ENCODE measurements at regions of chr15 and their contacts with region 1.

Region 1: DNA sequence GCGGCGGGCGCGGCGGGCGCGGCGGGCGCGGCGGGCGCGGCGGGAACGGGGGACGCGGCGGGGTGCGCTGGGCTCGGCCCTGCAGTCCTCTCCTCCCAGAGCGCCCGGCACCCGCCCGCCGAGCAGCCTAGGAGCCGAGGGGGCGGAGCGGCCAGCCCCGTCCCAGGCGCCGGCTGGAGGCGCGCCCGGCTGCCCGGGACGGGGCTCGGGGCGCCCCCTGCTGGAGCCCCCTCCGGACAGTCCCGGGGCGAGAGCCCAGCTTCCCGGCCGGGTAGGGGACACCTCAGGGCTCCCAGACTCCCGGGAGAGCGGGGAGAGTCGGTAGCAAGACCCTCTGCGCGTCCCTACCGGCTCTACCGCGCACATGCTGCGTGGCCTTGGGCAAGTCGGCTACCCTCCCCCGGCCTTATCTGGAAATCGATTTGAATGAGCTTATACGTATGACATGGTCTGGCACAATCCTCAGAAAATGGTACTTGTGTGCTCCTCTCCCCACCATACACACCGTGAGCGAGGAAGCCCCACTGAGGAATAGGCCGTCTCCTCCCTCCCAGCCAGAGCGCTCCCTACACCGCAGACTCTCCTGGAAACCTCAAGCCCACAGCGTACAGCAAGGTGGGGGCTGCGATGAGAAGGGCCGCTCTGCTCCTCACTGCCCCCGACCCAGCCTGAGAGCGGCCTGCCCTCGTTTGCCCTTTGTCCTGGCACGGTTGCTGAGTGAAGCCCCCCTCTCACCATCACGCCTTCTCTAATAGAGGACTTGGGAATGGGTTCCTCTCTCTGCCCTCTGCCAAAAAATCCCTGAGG is at the start of gene DAPK2:
- DNase-seq: peak; percentile 34
- ATAC-seq: peak; percentile 99
- H3K4me3 ChIP-seq: peak within 1 kb of the TSS; percentile 44
- H3K27ac ChIP-seq: no peak within 1 kb of the TSS
- H3K4me1 ChIP-seq: peaks cover 1% of the 10 kb centered on the region; the same call in 1 of the 2 replicates
- H3K27me3 ChIP-seq: peaks cover 40% of the 10 kb centered on the region
- CTCF ChIP-seq: peak; percentile 78
- POLR2A ChIP-seq: no peak
- RAD21 ChIP-seq: peak; percentile 68
- total RNA-seq, gene DAPK2: 0.28 and 0.36 TPM in 2 replicates

Region 2: DNA sequence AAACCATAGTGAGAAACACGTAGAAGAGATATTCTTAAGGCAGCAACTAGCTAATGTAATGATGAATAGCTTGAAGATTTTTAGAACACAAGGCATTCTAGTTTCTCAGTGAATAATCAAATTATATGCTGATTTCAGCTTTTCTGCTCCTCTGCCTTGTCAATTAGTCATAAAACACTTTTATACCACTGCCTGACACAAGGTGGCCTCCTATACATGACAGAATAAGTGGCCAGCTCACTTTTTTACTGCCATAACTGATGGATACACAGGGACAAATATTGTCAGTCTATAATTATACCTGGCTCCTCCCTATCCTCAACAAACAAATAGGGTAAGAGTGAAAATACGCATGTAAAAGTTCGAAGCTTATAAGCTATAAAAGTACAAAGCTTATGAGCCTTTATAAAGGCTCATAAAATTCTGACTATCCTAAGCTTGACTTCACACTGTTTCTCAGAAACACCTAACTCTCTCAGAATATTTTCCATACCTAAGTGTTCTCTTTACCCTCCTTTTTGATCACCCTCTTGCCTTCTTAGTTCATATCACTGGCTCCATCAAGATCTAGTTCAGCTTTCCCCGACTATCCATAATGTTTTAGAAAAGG is 294.4 kb before region 1 on chr15:
- CTCF ChIA-PET with region 1: interaction called, 12 read pairs
- POLR2A ChIA-PET with region 1: no interaction called
- dilution Hi-C with region 1: no loop called
- in situ Hi-C with region 1: no loop called
- intact Hi-C with region 1: loop called (anchors 1 kb)
- DNase-seq: peak; percentile 65
- ATAC-seq: peak; percentile 84
- H3K4me3 ChIP-seq: no peak overlapping the region
- H3K27ac ChIP-seq: no peak overlapping the region
- H3K4me1 ChIP-seq: no peaks in the 10 kb centered on the region; the same call in 1 of the 2 replicates
- H3K27me3 ChIP-seq: no peaks in the 10 kb centered on the region
- CTCF ChIP-seq: peak; percentile 77
- POLR2A ChIP-seq: no peak
- RAD21 ChIP-seq: peak; percentile 79

Region 3: DNA sequence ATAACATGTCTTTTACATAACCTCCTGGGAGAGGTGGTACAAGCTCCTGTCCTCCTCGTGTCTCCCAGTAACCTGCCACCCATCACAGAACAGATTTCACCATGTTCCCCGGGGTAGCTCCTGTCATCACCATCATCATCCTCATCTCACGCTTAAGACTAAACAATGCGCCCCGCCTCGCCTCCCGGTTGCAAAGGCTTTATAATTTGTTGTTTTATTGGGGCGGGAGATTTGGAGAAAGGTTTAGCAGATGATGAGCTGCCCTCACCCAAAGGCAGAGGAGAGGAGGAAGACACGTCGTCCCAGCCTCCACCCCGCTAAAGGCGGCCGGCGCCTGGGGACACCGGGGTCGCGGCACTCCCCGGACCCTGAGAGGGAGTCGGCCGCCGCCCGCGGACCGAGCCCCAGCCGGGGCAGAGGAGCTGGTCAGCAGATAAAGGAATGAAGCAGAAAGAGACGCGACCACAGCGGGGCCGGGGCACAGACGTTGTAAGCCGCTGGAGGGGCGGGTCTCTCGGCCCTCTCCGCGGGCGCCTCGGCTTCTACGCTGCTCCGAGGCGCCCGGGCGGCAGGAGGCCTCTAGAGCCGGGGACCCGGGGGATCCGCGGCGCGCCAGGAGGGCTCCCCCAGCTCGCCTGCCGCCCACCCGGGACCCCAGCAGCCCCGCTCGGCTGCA is 213.4 kb before region 1 on chr15:
- CTCF ChIA-PET with region 1: no interaction called
- POLR2A ChIA-PET with region 1: no interaction called
- dilution Hi-C with region 1: no loop called
- in situ Hi-C with region 1: no loop called
- intact Hi-C with region 1: loop called (anchors 5 kb)
- DNase-seq: peak; percentile 36
- ATAC-seq: peak; percentile 77
- H3K4me3 ChIP-seq: peak overlapping the region; percentile 77
- H3K27ac ChIP-seq: peak overlapping the region; percentile 68
- H3K4me1 ChIP-seq: peaks cover 2% of the 10 kb centered on the region; the same call in 1 of the 2 replicates
- H3K27me3 ChIP-seq: no peaks in the 10 kb centered on the region
- CTCF ChIP-seq: 0 out of 2 replicates have a peak, but pooled peaks have one; percentile 0
- POLR2A ChIP-seq: no peak
- RAD21 ChIP-seq: no peak

Region 4: DNA sequence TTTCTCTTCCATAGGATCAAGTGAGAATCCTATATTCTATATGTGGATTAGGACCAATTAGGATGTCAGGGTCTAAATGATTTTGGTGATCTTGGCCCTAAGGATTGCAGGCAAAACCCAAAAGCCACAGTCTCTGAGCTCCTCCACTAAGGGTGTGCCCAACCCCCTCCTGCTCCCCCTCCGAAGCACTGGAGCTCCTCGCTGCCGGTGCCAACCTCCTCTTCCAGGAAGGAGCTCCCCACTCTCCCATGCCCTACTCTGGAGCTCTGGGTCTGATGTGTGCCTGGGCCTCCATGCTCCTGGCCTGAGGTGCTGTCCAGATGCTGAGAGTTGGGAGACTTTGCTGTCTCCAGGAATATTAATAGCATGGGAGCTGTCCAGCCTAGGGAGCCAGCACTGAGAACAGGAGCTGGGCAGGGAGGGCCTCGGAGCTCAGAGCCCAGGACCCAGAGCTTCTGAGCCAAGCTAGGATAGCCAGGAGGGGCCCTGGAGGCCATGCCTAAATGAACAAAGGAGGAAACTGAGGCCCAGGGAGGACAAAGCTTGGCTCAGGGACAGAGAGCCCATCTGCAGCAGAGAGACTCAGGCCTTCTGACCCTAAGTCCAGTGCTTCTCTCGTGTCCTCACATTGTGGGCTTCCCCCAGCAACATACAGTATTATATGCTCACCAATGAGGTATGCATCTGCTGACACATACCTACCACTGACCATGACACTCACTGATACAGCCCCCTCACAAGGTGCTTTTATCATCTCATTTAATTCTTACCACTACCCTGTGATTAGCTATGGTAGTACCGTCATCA is 175.9 kb before region 1 on chr15:
- CTCF ChIA-PET with region 1: interaction called, 3 read pairs
- POLR2A ChIA-PET with region 1: no interaction called
- dilution Hi-C with region 1: no loop called
- in situ Hi-C with region 1: loop called (anchors 25 kb)
- intact Hi-C with region 1: no loop called
- DNase-seq: peak; percentile 85
- ATAC-seq: peak; percentile 100
- H3K4me3 ChIP-seq: no peak overlapping the region
- H3K27ac ChIP-seq: no peak overlapping the region
- H3K4me1 ChIP-seq: peaks cover 2% of the 10 kb centered on the region; the same call in 1 of the 2 replicates
- H3K27me3 ChIP-seq: peaks cover 6% of the 10 kb centered on the region
- CTCF ChIP-seq: no peak
- POLR2A ChIP-seq: no peak
- RAD21 ChIP-seq: peak; percentile 18; the same call in 1 of the 2 replicates

Region 5: GRCh38 chr15:63909819-63910437 is 136.6 kb before region 1 on chr15:
- CTCF ChIA-PET with region 1: no interaction called
- POLR2A ChIA-PET with region 1: no interaction called
- dilution Hi-C with region 1: no loop called
- in situ Hi-C with region 1: no loop called
- intact Hi-C with region 1: no loop called
- DNase-seq: peak; percentile 53
- ATAC-seq: peak; percentile 83
- H3K4me3 ChIP-seq: no peak overlapping the region
- H3K27ac ChIP-seq: peak overlapping the region; percentile 2; the same call in 1 of the 2 replicates
- H3K4me1 ChIP-seq: peaks cover 11% of the 10 kb centered on the region; the same call in 1 of the 2 replicates
- H3K27me3 ChIP-seq: peaks cover 10% of the 10 kb centered on the region
- CTCF ChIP-seq: no peak
- POLR2A ChIP-seq: no peak
- RAD21 ChIP-seq: no peak

Measured in IMR-90 (cell line).